Gastrocnemius medialis (tissue), 4 donors: ENCODE measurements at regions of chr11 and their contacts with region 1.

Region 1: GRCh38 chr11:116454020-116454645 is 318.7 kb downstream of the BUD13 start:
- DNase-seq: peak in 1 of 2 donors; percentile 21
- ATAC-seq: peak in 1 of 2 donors; percentile 66
- H3K4me3 ChIP-seq: no peak overlapping the region
- H3K27ac ChIP-seq: no peak overlapping the region
- H3K4me1 ChIP-seq: no peaks in the 10 kb centered on the region
- H3K27me3 ChIP-seq: no peaks in the 10 kb centered on the region
- CTCF ChIP-seq: peak; percentile 12 to 66 (median 52)
- POLR2A ChIP-seq: no peak

Region 2: GRCh38 chr11:116641561-116642045 is 187.5 kb after region 1 on chr11:
- in situ Hi-C with region 1: loop called in 3 of 4 experiments (anchors 10 kb)
- intact Hi-C with region 1: loop called (anchors 1 kb)
- DNase-seq: peak in 1 of 2 donors; percentile 18
- ATAC-seq: peak; percentile 19 to 30
- H3K4me3 ChIP-seq: no peak overlapping the region
- H3K27ac ChIP-seq: no peak overlapping the region
- H3K4me1 ChIP-seq: no peaks in the 10 kb centered on the region
- H3K27me3 ChIP-seq: peaks cover 0 to 5% (median 0%) of the 10 kb centered on the region in 3 donors
- CTCF ChIP-seq: peak; percentile 48 to 71 (median 64)
- POLR2A ChIP-seq: no peak

Region 3: DNA sequence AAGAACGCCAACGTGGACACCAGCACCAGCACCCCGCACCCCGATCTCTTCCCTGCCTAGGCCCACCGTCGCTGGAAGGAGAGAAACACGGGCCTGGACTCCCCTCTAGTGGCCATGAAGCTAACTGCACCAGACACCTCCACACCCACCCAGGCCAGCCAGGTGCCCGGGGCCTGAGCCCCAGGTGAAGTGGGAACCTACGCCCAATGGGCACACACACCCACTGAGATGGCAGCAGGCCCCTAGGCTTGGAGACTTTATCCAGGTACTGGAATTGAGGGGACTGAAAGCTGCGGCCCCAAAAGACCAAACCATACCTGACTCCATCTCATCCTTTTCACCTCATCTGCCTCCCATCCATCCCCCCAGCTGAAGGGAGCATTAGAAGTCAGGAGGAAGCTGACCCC is 237.6 kb after region 1 on chr11:
- in situ Hi-C with region 1: no loop called
- intact Hi-C with region 1: loop called (anchors 5 kb)
- DNase-seq: no peak
- ATAC-seq: peak; percentile 47 to 58
- H3K4me3 ChIP-seq: no peak overlapping the region
- H3K27ac ChIP-seq: no peak overlapping the region
- H3K4me1 ChIP-seq: no peaks in the 10 kb centered on the region
- H3K27me3 ChIP-seq: peaks cover 0 to 7% (median 0%) of the 10 kb centered on the region in 3 donors
- CTCF ChIP-seq: peak; percentile 59 to 81 (median 73)
- POLR2A ChIP-seq: no peak